Naive thymus-derived CD4-positive, alpha-beta T cell (primary cell): ENCODE measurements at regions of chr18 and their contacts with region 1.

Region 1: GRCh38 chr18:58671111-58671631 is at the start of gene MALT1:
- DNase-seq: peak; percentile 88 to 98 (median 92)
- ATAC-seq: peak; percentile 95
- H3K4me3 ChIP-seq: peak within 1 kb of the TSS; percentile 95
- H3K4me3 Mint-ChIP-seq: peak within 1 kb of the TSS; percentile 93 to 98 (median 96)
- H3K27ac ChIP-seq: peak within 1 kb of the TSS; percentile 88
- H3K27ac Mint-ChIP-seq: peak within 1 kb of the TSS; percentile 92 to 96 (median 95)
- H3K4me1 ChIP-seq: peaks cover 26 to 34% of the 10 kb centered on the region in 2 donors
- H3K4me1 Mint-ChIP-seq: peaks cover 36 to 70% (median 58%) of the 10 kb centered on the region in 7 donors
- H3K27me3 ChIP-seq: no peaks in the 10 kb centered on the region
- H3K27me3 Mint-ChIP-seq: peaks cover 0 to 6% (median 0%) of the 10 kb centered on the region in 5 donors
- total RNA-seq, gene MALT1: 50.0 to 101 (median 80.0) TPM

Region 2: DNA sequence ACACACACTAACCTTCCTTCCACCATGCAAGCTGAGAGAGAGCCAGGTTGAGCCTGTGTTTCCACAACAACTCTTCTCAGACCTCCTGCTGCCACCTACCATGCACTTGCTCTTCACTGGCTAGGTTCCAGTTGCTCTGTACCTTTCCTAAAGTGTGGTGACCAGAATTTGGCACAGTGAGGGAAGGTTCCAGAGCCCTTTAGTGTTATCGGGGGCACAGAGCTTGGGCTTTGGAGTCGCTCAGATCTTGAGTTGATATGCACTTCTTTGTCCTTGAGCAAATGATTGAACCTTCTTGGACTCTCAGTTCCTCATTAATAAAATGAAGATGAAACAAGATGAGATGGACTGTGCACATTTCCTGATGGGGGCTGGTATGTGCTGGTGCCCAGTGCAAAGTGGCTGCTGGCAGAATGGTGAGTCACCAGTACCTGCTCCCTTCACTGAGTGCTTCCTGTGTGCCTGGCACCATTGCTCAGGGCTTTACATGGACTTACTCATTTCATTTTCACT is 580.0 kb before region 1 on chr18:
- CTCF ChIA-PET with region 1: no interaction called
- POLR2A ChIA-PET with region 1: no interaction called
- intact Hi-C with region 1: no loop called
- DNase-seq: no peak
- ATAC-seq: peak; percentile 66
- H3K4me3 ChIP-seq: no peak overlapping the region
- H3K4me3 Mint-ChIP-seq: no peak overlapping the region
- H3K27ac ChIP-seq: no peak overlapping the region
- H3K27ac Mint-ChIP-seq: no peak overlapping the region
- H3K4me1 ChIP-seq: no peaks in the 10 kb centered on the region
- H3K4me1 Mint-ChIP-seq: peaks cover 0 to 4% (median 0%) of the 10 kb centered on the region in 7 donors
- H3K27me3 ChIP-seq: no peaks in the 10 kb centered on the region
- H3K27me3 Mint-ChIP-seq: peaks cover 0 to 5% (median 0%) of the 10 kb centered on the region in 5 donors

Region 3: DNA sequence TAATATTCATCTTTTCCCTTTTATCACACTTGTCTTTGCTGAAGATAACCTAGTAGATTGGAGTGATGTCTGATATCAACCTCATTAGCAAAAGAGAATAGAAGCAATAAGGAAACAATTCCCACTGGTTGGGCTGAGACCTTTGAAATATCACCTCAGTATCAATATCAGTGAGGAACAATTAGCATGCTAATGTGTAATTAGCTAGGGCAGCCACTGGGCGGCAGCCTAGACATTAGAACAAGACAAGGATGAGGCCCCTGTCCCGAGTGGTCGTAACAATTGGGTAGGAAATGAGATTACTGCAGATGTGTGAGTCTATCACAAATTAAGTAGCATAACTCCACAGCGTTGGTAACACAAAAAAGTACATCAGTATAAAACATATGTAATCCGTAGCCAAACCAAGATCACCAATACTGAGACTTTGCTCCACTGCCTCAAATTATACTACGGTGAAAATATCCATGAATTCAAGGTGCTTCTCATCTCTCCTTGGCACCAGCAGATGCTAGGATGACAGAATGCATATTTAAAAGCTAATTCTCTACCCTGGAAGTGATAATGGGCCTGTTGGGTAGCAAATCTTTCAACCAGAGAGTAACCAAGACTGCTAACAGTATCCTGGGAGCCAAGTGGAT is 141.3 kb before region 1 on chr18:
- CTCF ChIA-PET with region 1: interaction called, 5 read pairs
- POLR2A ChIA-PET with region 1: interaction called, 10 read pairs
- intact Hi-C with region 1: loop called (anchors 1 kb)
- DNase-seq: peak; percentile 39 to 71 (median 60)
- ATAC-seq: peak; percentile 87
- H3K4me3 ChIP-seq: no peak overlapping the region
- H3K4me3 Mint-ChIP-seq: no peak overlapping the region
- H3K27ac ChIP-seq: no peak overlapping the region
- H3K27ac Mint-ChIP-seq: no peak overlapping the region
- H3K4me1 ChIP-seq: no peaks in the 10 kb centered on the region
- H3K4me1 Mint-ChIP-seq: peaks cover 0 to 13% (median 6%) of the 10 kb centered on the region in 7 donors
- H3K27me3 ChIP-seq: no peaks in the 10 kb centered on the region
- H3K27me3 Mint-ChIP-seq: peaks cover 0 to 41% (median 0%) of the 10 kb centered on the region in 5 donors

Region 4: DNA sequence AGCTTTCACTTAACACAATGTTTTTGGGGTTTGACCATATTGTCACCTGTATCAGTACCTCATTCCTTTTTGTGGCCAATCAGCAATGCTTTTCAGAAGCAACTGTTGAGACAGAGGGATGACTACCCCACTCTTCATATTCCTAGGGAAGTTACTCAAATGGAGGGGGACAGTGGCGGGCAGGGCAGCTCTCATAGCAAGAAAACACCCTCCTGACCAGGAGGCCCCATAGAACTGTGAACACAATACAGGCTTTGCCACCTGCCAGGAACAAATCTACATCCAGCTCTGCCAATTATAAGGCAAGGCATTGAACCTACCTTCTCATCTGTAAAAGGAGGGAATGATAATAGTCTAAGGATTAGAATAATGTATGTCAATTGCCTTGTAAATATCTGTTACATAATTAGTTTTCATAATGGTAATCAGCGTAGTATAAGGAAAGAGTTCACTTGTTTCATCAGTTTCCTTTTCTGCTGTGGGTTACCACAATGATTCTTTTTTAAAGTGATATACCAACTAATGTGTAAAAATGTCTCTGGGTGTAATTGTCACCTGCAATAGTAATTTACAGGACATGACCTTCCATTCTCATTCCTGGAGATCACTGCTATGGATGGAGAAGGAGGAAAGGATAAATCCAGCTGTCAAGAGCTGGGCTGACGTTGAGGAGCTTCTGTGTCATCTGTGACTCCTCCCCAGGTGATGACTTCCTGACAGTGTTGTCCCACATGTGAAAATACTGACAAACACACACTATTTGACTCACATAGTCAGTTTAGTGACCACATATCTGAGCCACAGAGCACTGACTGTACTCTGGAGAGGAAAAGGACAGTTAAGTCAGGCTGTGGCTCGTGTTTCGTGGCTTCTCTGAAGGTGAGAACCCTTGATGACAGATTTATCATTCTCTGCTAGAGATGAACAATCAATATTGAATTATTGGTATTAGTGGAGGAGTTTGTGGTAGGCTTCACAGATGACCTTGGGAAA is 55.7 kb before region 1 on chr18:
- CTCF ChIA-PET with region 1: interaction called, 5 read pairs
- POLR2A ChIA-PET with region 1: interaction called, 17 read pairs
- intact Hi-C with region 1: loop called (anchors 1 kb)
- DNase-seq: peak in 8 of 9 donors; percentile 15 to 65 (median 50)
- ATAC-seq: peak; percentile 92
- H3K4me3 ChIP-seq: peak overlapping the region; percentile 11
- H3K4me3 Mint-ChIP-seq: peak overlapping the region; percentile 67 to 88 (median 81)
- H3K27ac ChIP-seq: peak overlapping the region; percentile 65
- H3K27ac Mint-ChIP-seq: peak overlapping the region; percentile 85 to 98 (median 95)
- H3K4me1 ChIP-seq: peaks cover 23 to 36% of the 10 kb centered on the region in 2 donors
- H3K4me1 Mint-ChIP-seq: peaks cover 32 to 58% (median 48%) of the 10 kb centered on the region in 7 donors
- H3K27me3 ChIP-seq: no peaks in the 10 kb centered on the region
- H3K27me3 Mint-ChIP-seq: peaks cover 0 to 29% (median 0%) of the 10 kb centered on the region in 5 donors

Region 5: DNA sequence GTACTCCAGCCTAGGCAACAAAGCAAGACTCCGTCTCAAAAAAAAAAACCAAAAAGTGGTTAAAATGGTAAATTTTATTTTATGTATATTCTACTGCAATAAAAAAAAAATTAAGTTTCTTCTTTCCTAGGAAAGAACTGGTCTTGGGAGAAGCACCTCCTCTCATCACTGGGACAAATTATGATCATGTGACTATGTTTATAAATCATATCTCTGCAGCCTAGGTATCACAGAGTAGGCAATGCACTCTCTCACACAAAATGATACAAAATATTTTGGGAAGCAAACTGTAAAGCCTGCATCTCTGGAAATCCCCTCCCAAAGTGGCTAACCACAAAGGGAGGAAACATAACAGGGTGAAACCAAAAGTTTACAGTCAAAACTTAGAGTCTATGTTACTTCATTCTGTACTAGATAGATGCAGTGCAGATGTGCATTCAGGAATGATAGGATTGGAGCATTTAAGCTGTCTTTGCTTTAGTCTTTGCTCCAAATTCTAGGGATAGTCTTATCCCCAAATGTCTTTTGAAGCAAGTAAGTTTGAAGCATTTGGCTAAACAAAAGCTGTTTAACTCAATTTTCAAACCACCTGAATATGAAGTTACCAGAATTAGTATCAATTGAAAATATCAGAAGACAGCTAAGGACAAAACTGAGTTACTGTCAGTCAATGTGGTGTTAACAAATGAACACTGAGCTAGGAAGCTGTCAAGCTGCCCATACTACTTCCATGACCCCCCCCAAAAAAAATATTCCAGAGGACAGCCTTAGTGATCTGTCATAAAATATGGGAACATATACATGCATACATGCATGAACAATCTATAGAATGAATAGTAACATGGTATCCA is 21.0 kb before region 1 on chr18:
- CTCF ChIA-PET with region 1: no interaction called
- POLR2A ChIA-PET with region 1: interaction called, 8 read pairs
- intact Hi-C with region 1: loop called in 1 of 2 experiments (anchors 1 kb)
- DNase-seq: peak in 7 of 9 donors; percentile 21 to 65 (median 53)
- ATAC-seq: peak; percentile 87
- H3K4me3 ChIP-seq: no peak overlapping the region
- H3K4me3 Mint-ChIP-seq: peak overlapping the region; percentile 8 to 77 (median 60)
- H3K27ac ChIP-seq: no peak overlapping the region
- H3K27ac Mint-ChIP-seq: peak overlapping the region in 8 of 9 donors; percentile 17 to 88 (median 47)
- H3K4me1 ChIP-seq: peaks cover 15 to 27% of the 10 kb centered on the region in 2 donors
- H3K4me1 Mint-ChIP-seq: peaks cover 28 to 72% (median 58%) of the 10 kb centered on the region in 7 donors
- H3K27me3 ChIP-seq: no peaks in the 10 kb centered on the region
- H3K27me3 Mint-ChIP-seq: peaks cover 0 to 6% (median 0%) of the 10 kb centered on the region in 5 donors

Region 6: GRCh38 chr18:58699551-58699950 is 28.4 kb after region 1 on chr18:
- CTCF ChIA-PET with region 1: no interaction called
- POLR2A ChIA-PET with region 1: interaction called, 13 read pairs
- intact Hi-C with region 1: no loop called
- DNase-seq: no peak
- ATAC-seq: no peak
- H3K4me3 ChIP-seq: no peak overlapping the region
- H3K4me3 Mint-ChIP-seq: no peak overlapping the region
- H3K27ac ChIP-seq: no peak overlapping the region
- H3K27ac Mint-ChIP-seq: no peak overlapping the region
- H3K4me1 ChIP-seq: peaks cover 9 to 39% of the 10 kb centered on the region in 2 donors
- H3K4me1 Mint-ChIP-seq: peaks cover 20 to 54% (median 28%) of the 10 kb centered on the region in 7 donors
- H3K27me3 ChIP-seq: no peaks in the 10 kb centered on the region
- H3K27me3 Mint-ChIP-seq: no peaks in the 10 kb centered on the region

Region 7: GRCh38 chr18:58768293-58768974 is 97.3 kb after region 1 on chr18:
- CTCF ChIA-PET with region 1: interaction called, 11 read pairs
- POLR2A ChIA-PET with region 1: interaction called, 5 read pairs
- intact Hi-C with region 1: loop called (anchors 1 kb)
- DNase-seq: peak; percentile 40 to 71 (median 60)
- ATAC-seq: peak; percentile 89
- H3K4me3 ChIP-seq: no peak overlapping the region
- H3K4me3 Mint-ChIP-seq: peak overlapping the region in 8 of 10 donors; percentile 36 to 81 (median 66)
- H3K27ac ChIP-seq: no peak overlapping the region
- H3K27ac Mint-ChIP-seq: no peak overlapping the region
- H3K4me1 ChIP-seq: peaks cover 6 to 17% of the 10 kb centered on the region in 2 donors
- H3K4me1 Mint-ChIP-seq: peaks cover 0 to 19% (median 16%) of the 10 kb centered on the region in 7 donors
- H3K27me3 ChIP-seq: peaks cover 0 to 10% of the 10 kb centered on the region in 2 donors
- H3K27me3 Mint-ChIP-seq: peaks cover 30 to 63% (median 37%) of the 10 kb centered on the region in 5 donors